Naive thymus-derived CD4-positive, alpha-beta T cell (primary cell): ENCODE measurements at regions of chr12 and their contacts with region 1.

Region 1: GRCh38 chr12:96194971-96195844 is 1.0 kb downstream of the ELK3 start:
- DNase-seq: peak in 8 of 9 donors; percentile 34 to 91 (median 71)
- ATAC-seq: peak; percentile 80
- H3K4me3 ChIP-seq: peak overlapping the region; percentile 84
- H3K4me3 Mint-ChIP-seq: peak overlapping the region; percentile 92 to 100 (median 98)
- H3K27ac ChIP-seq: peak overlapping the region; percentile 86
- H3K27ac Mint-ChIP-seq: peak overlapping the region; percentile 95 to 99 (median 99)
- H3K4me1 ChIP-seq: peaks cover 29 to 33% of the 10 kb centered on the region in 2 donors
- H3K4me1 Mint-ChIP-seq: peaks cover 30 to 54% (median 46%) of the 10 kb centered on the region in 7 donors
- H3K27me3 ChIP-seq: no peaks in the 10 kb centered on the region
- H3K27me3 Mint-ChIP-seq: peaks cover 0 to 3% (median 0%) of the 10 kb centered on the region in 5 donors

Region 2: GRCh38 chr12:95881331-95881955 is 313.8 kb before region 1 on chr12:
- CTCF ChIA-PET with region 1: no interaction called
- POLR2A ChIA-PET with region 1: no interaction called
- intact Hi-C with region 1: no loop called
- DNase-seq: no peak
- ATAC-seq: no peak
- H3K4me3 ChIP-seq: no peak overlapping the region
- H3K4me3 Mint-ChIP-seq: no peak overlapping the region
- H3K27ac ChIP-seq: no peak overlapping the region
- H3K27ac Mint-ChIP-seq: no peak overlapping the region
- H3K4me1 ChIP-seq: no peaks in the 10 kb centered on the region
- H3K4me1 Mint-ChIP-seq: no peaks in the 10 kb centered on the region
- H3K27me3 ChIP-seq: no peaks in the 10 kb centered on the region
- H3K27me3 Mint-ChIP-seq: peaks cover 0 to 4% (median 0%) of the 10 kb centered on the region in 5 donors

Region 3: GRCh38 chr12:95908573-95908972 is 286.6 kb before region 1 on chr12:
- CTCF ChIA-PET with region 1: no interaction called
- POLR2A ChIA-PET with region 1: no interaction called
- intact Hi-C with region 1: no loop called
- DNase-seq: no peak
- ATAC-seq: no peak
- H3K4me3 ChIP-seq: no peak overlapping the region
- H3K4me3 Mint-ChIP-seq: no peak overlapping the region
- H3K27ac ChIP-seq: no peak overlapping the region
- H3K27ac Mint-ChIP-seq: no peak overlapping the region
- H3K4me1 ChIP-seq: no peaks in the 10 kb centered on the region
- H3K4me1 Mint-ChIP-seq: no peaks in the 10 kb centered on the region
- H3K27me3 ChIP-seq: no peaks in the 10 kb centered on the region
- H3K27me3 Mint-ChIP-seq: peaks cover 7 to 31% (median 24%) of the 10 kb centered on the region in 5 donors

Region 4: DNA sequence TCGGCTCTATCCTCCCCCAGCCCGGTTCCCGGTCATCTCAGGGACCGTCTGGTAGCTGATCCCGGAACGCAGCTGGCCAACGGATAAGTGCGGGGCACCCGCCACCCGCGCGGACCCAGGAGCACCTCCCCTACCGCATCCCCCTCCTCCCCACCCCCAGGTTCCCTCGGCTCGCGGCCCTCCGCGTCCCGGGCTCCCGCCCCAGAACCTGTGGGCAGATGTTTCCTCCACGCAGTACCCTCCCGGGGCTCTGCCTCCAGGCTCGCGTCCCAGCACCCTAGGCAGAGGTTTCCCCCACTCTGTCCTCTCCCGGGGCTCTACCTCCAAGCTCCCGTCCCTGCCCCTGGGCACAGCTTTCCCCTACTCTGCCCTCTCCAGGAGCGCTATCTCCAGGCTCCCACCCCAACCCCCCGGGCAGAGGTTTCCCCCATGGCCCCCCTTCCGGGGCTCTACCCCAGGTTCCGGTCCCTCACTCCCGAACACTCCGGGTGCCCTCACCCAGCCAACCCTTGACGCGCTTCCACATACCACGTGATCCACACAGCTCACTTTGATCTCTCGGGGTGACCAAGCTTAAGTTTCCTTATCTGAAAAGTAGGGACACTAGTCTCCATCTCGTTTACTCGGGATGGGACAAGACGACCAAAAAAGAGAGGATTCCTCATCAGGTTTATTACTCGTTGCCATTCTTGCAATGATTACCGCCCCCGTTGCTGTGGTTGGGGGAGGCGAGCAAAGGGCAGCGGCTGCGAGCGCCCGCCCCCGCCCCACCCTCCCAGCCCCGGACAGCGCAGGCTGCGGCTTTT is 252.5 kb before region 1 on chr12 and contains the start of gene CCDC38:
- CTCF ChIA-PET with region 1: no interaction called
- POLR2A ChIA-PET with region 1: no interaction called
- intact Hi-C with region 1: loop called (anchors 5 kb)
- DNase-seq: peak; percentile 56 to 86 (median 82)
- ATAC-seq: peak; percentile 97
- H3K4me3 ChIP-seq: peak within 1 kb of the TSS; percentile 93
- H3K4me3 Mint-ChIP-seq: peak within 1 kb of the TSS; percentile 88 to 99 (median 96)
- H3K27ac ChIP-seq: peak within 1 kb of the TSS; percentile 86
- H3K27ac Mint-ChIP-seq: peak within 1 kb of the TSS; percentile 85 to 97 (median 89)
- H3K4me1 ChIP-seq: peaks cover 6% of the 10 kb centered on the region in 2 donors
- H3K4me1 Mint-ChIP-seq: peaks cover 4 to 12% (median 10%) of the 10 kb centered on the region in 7 donors
- H3K27me3 ChIP-seq: no peaks in the 10 kb centered on the region
- H3K27me3 Mint-ChIP-seq: peaks cover 0 to 26% (median 0%) of the 10 kb centered on the region in 5 donors
- total RNA-seq, gene CCDC38: 0.07 to 0.27 TPM in 2 of 5 experiments, not detected in the others

Region 5: DNA sequence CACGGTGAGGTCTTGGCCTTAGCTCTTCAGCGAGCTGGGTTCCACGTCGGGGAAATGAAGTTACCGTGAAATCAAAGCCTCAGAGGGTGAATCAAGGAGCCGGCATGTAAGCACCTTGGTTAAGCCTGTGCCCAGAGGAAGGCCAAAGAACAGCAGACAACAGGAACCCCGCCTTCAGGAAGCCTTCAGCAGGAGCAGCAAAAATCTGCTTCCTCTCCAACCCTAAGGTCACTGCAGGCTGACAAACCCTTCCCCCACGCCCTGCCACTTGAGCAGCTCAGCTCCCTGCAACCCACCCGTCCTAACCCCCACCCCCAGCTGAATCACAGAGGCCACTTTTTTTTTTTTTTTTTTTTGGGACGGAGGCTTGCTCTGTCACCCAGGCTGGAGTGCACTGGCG is 86.9 kb before region 1 on chr12:
- CTCF ChIA-PET with region 1: no interaction called
- POLR2A ChIA-PET with region 1: no interaction called
- intact Hi-C with region 1: loop called in 1 of 2 experiments (anchors 2 kb)
- DNase-seq: peak in 8 of 9 donors; percentile 11 to 52 (median 42)
- ATAC-seq: peak; percentile 74
- H3K4me3 ChIP-seq: no peak overlapping the region
- H3K4me3 Mint-ChIP-seq: peak overlapping the region; percentile 60 to 88 (median 78)
- H3K27ac ChIP-seq: peak overlapping the region; percentile 58
- H3K27ac Mint-ChIP-seq: peak overlapping the region; percentile 84 to 98 (median 91)
- H3K4me1 ChIP-seq: peaks cover 0 to 10% of the 10 kb centered on the region in 2 donors
- H3K4me1 Mint-ChIP-seq: peaks cover 13 to 43% (median 31%) of the 10 kb centered on the region in 7 donors
- H3K27me3 ChIP-seq: no peaks in the 10 kb centered on the region
- H3K27me3 Mint-ChIP-seq: peaks cover 0 to 8% (median 0%) of the 10 kb centered on the region in 5 donors

Region 6: GRCh38 chr12:96208801-96209549 is 13.8 kb after region 1 on chr12:
- CTCF ChIA-PET with region 1: interaction called, 35 read pairs
- POLR2A ChIA-PET with region 1: interaction called, 118 read pairs
- intact Hi-C with region 1: loop called in 1 of 2 experiments (anchors 1 kb)
- DNase-seq: no peak
- ATAC-seq: peak; percentile 15
- H3K4me3 ChIP-seq: no peak overlapping the region
- H3K4me3 Mint-ChIP-seq: peak overlapping the region; percentile 69 to 97 (median 85)
- H3K27ac ChIP-seq: peak overlapping the region; percentile 62
- H3K27ac Mint-ChIP-seq: peak overlapping the region; percentile 50 to 99 (median 96)
- H3K4me1 ChIP-seq: peaks cover 64 to 93% of the 10 kb centered on the region in 2 donors
- H3K4me1 Mint-ChIP-seq: peaks cover 70 to 100% (median 98%) of the 10 kb centered on the region in 7 donors
- H3K27me3 ChIP-seq: no peaks in the 10 kb centered on the region
- H3K27me3 Mint-ChIP-seq: no peaks in the 10 kb centered on the region

Region 7: GRCh38 chr12:96434107-96434506 is 238.9 kb after region 1 on chr12:
- CTCF ChIA-PET with region 1: no interaction called
- POLR2A ChIA-PET with region 1: no interaction called
- intact Hi-C with region 1: loop called in 1 of 2 experiments (anchors 1 kb)
- DNase-seq: peak; percentile 10 to 92 (median 88)
- ATAC-seq: peak; percentile 100
- H3K4me3 ChIP-seq: no peak overlapping the region
- H3K4me3 Mint-ChIP-seq: peak overlapping the region; percentile 10 to 81 (median 64)
- H3K27ac ChIP-seq: peak overlapping the region; percentile 81
- H3K27ac Mint-ChIP-seq: peak overlapping the region; percentile 60 to 94 (median 84)
- H3K4me1 ChIP-seq: peaks cover 15 to 20% of the 10 kb centered on the region in 2 donors
- H3K4me1 Mint-ChIP-seq: peaks cover 24 to 52% (median 43%) of the 10 kb centered on the region in 7 donors
- H3K27me3 ChIP-seq: no peaks in the 10 kb centered on the region
- H3K27me3 Mint-ChIP-seq: no peaks in the 10 kb centered on the region